ENCODE measurements at regions of chr1 and their contacts with region 1.

Region 1: GRCh38 chr1:162580308-162580707 is 18.8 kb downstream of the UAP1 start:
- DNase-seq: no peak
- ATAC-seq: no peak
- H3K4me3 ChIP-seq: no peak overlapping the region
- H3K4me1 ChIP-seq: no peaks in the 10 kb centered on the region
- CTCF ChIP-seq: no peak

Region 2: GRCh38 chr1:162069328-162070093 is 510.8 kb before region 1 on chr1 and contains the start of gene NOS1AP:
- intact Hi-C with region 1: no loop called
- DNase-seq: peak; percentile 88 to 93 (median 89)
- ATAC-seq: peak; percentile 94
- H3K4me3 ChIP-seq: peak within 1 kb of the TSS; percentile 63
- H3K4me1 ChIP-seq: peaks cover 14% of the 10 kb centered on the region
- CTCF ChIP-seq: no peak
- total RNA-seq, gene NOS1AP: 11.8 to 17.4 (median 14.3) TPM

Region 3: GRCh38 chr1:162502928-162503327 is 77.4 kb before region 1 on chr1:
- intact Hi-C with region 1: loop called in 1 of 2 experiments (anchors 5 kb)
- DNase-seq: no peak
- ATAC-seq: no peak
- H3K4me3 ChIP-seq: no peak overlapping the region
- H3K4me1 ChIP-seq: peaks cover 7% of the 10 kb centered on the region
- CTCF ChIP-seq: no peak

Measured in mucosa of descending colon (tissue), 3 donors.